Mammary epithelial cell (primary cell): ENCODE measurements at regions of chr2 and their contacts with region 1.

Region 1: GRCh38 chr2:101419096-101419663 is 31.9 kb upstream of the CREG2 start:
- DNase-seq: peak; percentile 45
- H3K4me3 ChIP-seq: no peak overlapping the region
- H3K27ac ChIP-seq: no peak overlapping the region
- H3K4me1 ChIP-seq: no peaks in the 10 kb centered on the region
- H3K27me3 ChIP-seq: no peaks in the 10 kb centered on the region
- CTCF ChIP-seq: peak; percentile 77 to 79

Region 2: DNA sequence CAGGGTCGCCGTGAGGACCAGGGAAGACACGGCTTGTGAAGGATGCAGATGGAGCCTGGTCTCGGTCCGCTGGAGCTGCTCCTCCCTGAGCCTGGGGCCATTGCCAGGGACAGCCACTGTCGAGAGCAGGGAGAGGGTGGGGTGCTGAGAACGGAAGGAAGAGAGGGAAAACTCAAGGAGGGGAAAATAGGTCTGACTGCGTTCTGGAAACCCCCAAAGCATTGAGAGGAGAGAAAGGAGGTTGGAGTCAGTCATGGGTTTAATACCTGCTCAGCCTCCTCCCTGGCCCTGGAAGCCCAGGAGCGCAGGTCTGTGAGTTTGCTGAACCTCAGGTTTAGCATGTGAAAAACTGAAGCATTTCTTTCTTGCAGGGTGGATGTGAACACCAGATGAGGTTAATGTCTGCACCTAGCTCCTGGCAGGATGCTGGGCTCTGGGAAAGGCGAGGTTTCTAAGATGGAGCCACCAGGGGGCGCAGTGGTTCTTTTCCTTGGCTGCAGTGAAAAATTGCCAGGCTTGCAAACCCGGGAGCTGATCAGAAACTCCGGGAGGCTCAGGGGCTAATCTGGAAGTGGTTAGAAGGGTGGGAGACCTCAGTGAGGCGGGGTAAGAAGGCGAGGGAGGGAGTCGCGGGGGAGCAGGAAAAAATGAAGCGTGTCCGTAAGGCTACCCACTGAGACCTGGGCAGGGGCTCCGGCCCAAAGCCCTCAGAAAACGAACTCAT is 77.1 kb before region 1 on chr2:
- CTCF ChIA-PET with region 1: interaction called, 5 read pairs
- dilution Hi-C with region 1: no loop called
- in situ Hi-C with region 1: loop called in 1 of 2 experiments (anchors 10 kb)
- intact Hi-C with region 1: loop called (anchors 1 kb)
- DNase-seq: peak; percentile 52
- H3K4me3 ChIP-seq: no peak overlapping the region
- H3K27ac ChIP-seq: no peak overlapping the region
- H3K4me1 ChIP-seq: no peaks in the 10 kb centered on the region
- H3K27me3 ChIP-seq: no peaks in the 10 kb centered on the region
- CTCF ChIP-seq: peak; percentile 80 to 84

Region 3: DNA sequence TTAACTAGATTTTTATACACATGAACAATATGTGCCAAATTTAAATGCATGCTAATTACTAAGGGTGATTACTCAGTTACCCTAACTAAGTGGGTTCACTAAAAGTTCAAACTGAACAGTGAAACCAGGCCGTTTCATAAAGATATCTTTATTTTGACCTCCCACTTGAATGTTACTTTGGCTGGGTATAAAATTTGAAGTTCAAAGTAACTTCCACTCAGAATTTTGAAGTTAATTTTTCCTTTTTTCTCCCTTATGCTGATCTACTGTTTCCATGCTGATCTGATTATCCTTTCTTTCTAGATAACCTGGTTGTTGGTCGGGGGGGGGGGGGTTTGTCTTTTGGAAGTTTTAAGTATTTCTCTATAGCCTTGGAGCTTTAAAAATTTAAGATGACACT is 252.9 kb after region 1 on chr2:
- CTCF ChIA-PET with region 1: interaction called, 18 read pairs
- dilution Hi-C with region 1: no loop called
- in situ Hi-C with region 1: no loop called
- intact Hi-C with region 1: no loop called
- DNase-seq: no peak
- H3K4me3 ChIP-seq: no peak overlapping the region
- H3K27ac ChIP-seq: no peak overlapping the region
- H3K4me1 ChIP-seq: no peaks in the 10 kb centered on the region
- H3K27me3 ChIP-seq: no peaks in the 10 kb centered on the region
- CTCF ChIP-seq: no peak

Region 4: GRCh38 chr2:101831351-101831865 is 412.2 kb after region 1 on chr2:
- CTCF ChIA-PET with region 1: no interaction called
- dilution Hi-C with region 1: no loop called
- in situ Hi-C with region 1: loop called (anchors 10 to 25 kb)
- intact Hi-C with region 1: loop called (anchors 1 kb)
- DNase-seq: peak; percentile 64
- H3K4me3 ChIP-seq: no peak overlapping the region
- H3K27ac ChIP-seq: peak overlapping the region; percentile 58
- H3K4me1 ChIP-seq: peaks cover 52% of the 10 kb centered on the region
- H3K27me3 ChIP-seq: no peaks in the 10 kb centered on the region
- CTCF ChIP-seq: peak; percentile 66 to 82

Region 5: DNA sequence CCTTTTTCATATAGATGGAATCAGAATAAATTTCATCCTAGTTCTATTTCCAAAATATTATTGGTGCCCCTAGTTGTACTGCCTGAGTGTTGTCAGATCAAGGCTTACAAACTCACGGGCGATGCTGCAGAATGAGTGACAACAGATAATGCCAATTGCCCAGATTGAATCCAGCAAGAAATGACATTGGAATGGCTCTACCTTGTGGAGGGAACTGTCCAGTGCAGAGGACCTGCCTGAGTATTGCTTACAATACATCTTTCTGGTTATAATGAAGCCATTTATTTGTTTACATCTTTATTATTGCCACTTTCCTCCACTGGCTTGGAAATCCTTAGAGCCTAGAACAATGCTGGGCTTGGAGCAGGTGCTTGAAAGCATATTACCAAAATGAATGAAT is 564.7 kb after region 1 on chr2:
- CTCF ChIA-PET with region 1: interaction called, 3 read pairs
- dilution Hi-C with region 1: no loop called
- in situ Hi-C with region 1: no loop called
- intact Hi-C with region 1: loop called (anchors 10 kb)
- DNase-seq: peak; percentile 8
- H3K4me3 ChIP-seq: no peak overlapping the region
- H3K27ac ChIP-seq: no peak overlapping the region
- H3K4me1 ChIP-seq: peaks cover 73% of the 10 kb centered on the region
- H3K27me3 ChIP-seq: no peaks in the 10 kb centered on the region
- CTCF ChIP-seq: peak; percentile 39 to 69